Cardiac septum (tissue), 1 donor: ENCODE measurements at regions of chr3 and their contacts with region 1.

Region 1: GRCh38 chr3:10026084-10026890 is at the start of gene FANCD2:
- DNase-seq: peak; percentile 97
- total RNA-seq, gene FANCD2: 0.48 TPM

Region 2: GRCh38 chr3:9986237-9986725 is 40.0 kb before region 1 on chr3:
- intact Hi-C with region 1: loop called (anchors 5 kb)
- DNase-seq: no peak

Region 3: DNA sequence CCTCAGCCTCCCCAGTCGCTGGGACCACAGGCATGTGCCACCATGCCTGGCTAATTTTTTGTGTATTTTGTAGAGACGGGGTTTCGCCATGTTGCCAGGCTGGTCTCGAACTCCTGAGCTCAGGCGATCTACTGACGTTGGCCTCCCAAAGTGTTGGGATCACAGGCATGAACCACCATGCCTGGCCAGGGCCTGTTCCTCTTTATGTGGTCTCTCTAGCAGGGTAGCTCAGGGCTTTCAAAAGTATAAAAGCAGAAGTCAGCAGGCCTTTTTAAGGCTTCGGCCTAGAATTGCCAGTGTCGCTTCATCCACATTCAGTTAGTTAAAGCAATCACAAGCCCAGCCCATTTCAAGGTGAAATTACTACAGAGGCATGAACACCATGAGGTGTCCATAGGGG is 122.9 kb after region 1 on chr3:
- intact Hi-C with region 1: no loop called
- DNase-seq: no peak